HCT116 (cell line): ENCODE measurements at regions of chr14 and their contacts with region 1.

Region 1: GRCh38 chr14:69879175-69880043 is at the start of gene SMOC1:
- DNase-seq: no peak
- ATAC-seq: no peak
- H3K4me3 ChIP-seq: no peak within 1 kb of the TSS
- H3K27ac ChIP-seq: no peak within 1 kb of the TSS
- H3K4me1 ChIP-seq: no peaks in the 10 kb centered on the region
- H3K27me3 ChIP-seq: peaks cover 27% of the 10 kb centered on the region
- CTCF ChIP-seq: no peak
- POLR2A ChIP-seq: no peak
- RAD21 ChIP-seq: no peak
- total RNA-seq, gene SMOC1: not detected

Region 2: GRCh38 chr14:69695322-69696203 is 183.8 kb before region 1 on chr14:
- CTCF ChIA-PET with region 1: no interaction called
- POLR2A ChIA-PET with region 1: no interaction called
- RAD21 ChIA-PET with region 1: no interaction called
- intact Hi-C with region 1: no loop called
- DNase-seq: no peak
- ATAC-seq: no peak
- H3K4me3 ChIP-seq: no peak overlapping the region
- H3K27ac ChIP-seq: no peak overlapping the region
- H3K4me1 ChIP-seq: peaks cover 4 to 12% of the 10 kb centered on the region in 2 experiments; a peak in 2 of 4 replicates
- H3K27me3 ChIP-seq: no peaks in the 10 kb centered on the region
- CTCF ChIP-seq: no peak
- POLR2A ChIP-seq: no peak
- RAD21 ChIP-seq: no peak

Region 3: GRCh38 chr14:70013269-70013873 is 134.0 kb after region 1 on chr14:
- CTCF ChIA-PET with region 1: interaction called, 3 read pairs
- POLR2A ChIA-PET with region 1: no interaction called
- RAD21 ChIA-PET with region 1: no interaction called
- intact Hi-C with region 1: loop called (anchors 1 kb)
- DNase-seq: peak; percentile 23
- ATAC-seq: peak; percentile 91
- H3K4me3 ChIP-seq: no peak overlapping the region
- H3K27ac ChIP-seq: no peak overlapping the region
- H3K4me1 ChIP-seq: no peaks in the 10 kb centered on the region
- H3K27me3 ChIP-seq: no peaks in the 10 kb centered on the region
- CTCF ChIP-seq: peak; percentile 58 to 94 (median 93); a peak in 5 of 6 replicates
- POLR2A ChIP-seq: no peak
- RAD21 ChIP-seq: peak; percentile 55

Region 4: DNA sequence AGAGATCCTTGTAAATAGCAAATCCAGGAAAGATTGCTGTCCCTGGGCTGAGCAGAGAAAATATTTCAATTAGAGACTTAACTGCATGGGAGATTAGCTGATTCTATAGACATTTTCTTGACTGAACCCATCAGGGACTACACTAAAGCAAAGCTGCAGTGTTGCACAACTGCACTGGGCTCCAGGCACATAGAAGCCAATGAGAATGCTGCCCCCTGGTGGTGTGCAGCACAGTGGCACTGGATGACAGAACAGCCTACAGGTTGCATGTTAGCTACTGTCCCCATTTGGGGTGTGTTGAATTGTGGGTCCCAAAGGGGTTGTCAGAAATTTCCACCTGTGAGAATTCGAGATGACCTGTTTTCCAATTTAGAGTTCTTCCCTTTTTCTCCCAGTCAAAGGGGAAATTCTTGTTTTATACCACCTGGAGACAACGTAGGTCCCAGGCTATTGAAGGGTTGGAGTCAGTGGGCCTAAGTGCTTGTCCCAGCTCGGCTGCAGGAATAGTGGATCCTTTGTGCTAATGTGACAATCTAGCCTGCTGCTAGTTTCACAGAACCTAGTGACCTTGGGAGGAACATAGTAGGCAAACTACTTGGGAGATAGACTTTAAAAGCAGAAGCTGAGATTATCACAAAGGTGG is 194.6 kb after region 1 on chr14:
- CTCF ChIA-PET with region 1: interaction called, 4 read pairs
- POLR2A ChIA-PET with region 1: no interaction called
- RAD21 ChIA-PET with region 1: no interaction called
- intact Hi-C with region 1: loop called (anchors 1 kb)
- DNase-seq: peak; percentile 64
- ATAC-seq: peak; percentile 99
- H3K4me3 ChIP-seq: no peak overlapping the region
- H3K27ac ChIP-seq: no peak overlapping the region
- H3K4me1 ChIP-seq: no peaks in the 10 kb centered on the region
- H3K27me3 ChIP-seq: peaks cover 35% of the 10 kb centered on the region
- CTCF ChIP-seq: peak; percentile 79 to 98 (median 96)
- POLR2A ChIP-seq: no peak
- RAD21 ChIP-seq: peak; percentile 76

Region 5: GRCh38 chr14:70317969-70318634 is 438.7 kb after region 1 on chr14:
- CTCF ChIA-PET with region 1: no interaction called
- POLR2A ChIA-PET with region 1: no interaction called
- RAD21 ChIA-PET with region 1: no interaction called
- intact Hi-C with region 1: loop called (anchors 5 kb)
- DNase-seq: peak; percentile 38
- ATAC-seq: peak; percentile 87
- H3K4me3 ChIP-seq: no peak overlapping the region
- H3K27ac ChIP-seq: no peak overlapping the region
- H3K4me1 ChIP-seq: no peaks in the 10 kb centered on the region
- H3K27me3 ChIP-seq: no peaks in the 10 kb centered on the region
- CTCF ChIP-seq: peak; percentile 45 to 62 (median 51); a peak in 5 of 6 replicates
- POLR2A ChIP-seq: no peak
- RAD21 ChIP-seq: peak; percentile 73